Testis (tissue), 5 donors: ENCODE measurements at regions of chr16 and their contacts with region 1.

Region 1: DNA sequence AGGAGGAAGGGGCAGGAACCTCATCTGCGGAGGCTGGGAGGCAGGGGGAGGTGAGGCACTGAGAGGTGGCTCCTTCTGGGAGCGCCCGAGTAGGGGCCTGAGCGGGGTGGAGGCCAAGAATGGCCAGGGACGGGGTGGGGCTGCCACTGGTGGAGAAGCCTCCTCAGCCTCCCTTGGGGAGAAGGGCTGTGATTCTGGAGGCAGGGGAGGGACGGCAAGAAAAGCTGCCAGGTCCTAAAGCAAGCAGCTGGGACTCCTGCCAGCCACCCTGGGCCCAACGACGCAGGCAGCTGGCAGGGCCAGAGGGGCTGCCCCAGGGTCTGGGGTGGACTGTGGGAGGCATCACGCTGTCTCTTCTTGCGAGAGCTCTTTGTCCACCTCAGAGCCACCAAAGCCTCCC is 12.7 kb upstream of the MLKL start:
- DNase-seq: no peak
- H3K4me3 ChIP-seq: no peak overlapping the region
- H3K27ac ChIP-seq: no peak overlapping the region
- H3K4me1 ChIP-seq: no peaks in the 10 kb centered on the region
- H3K27me3 ChIP-seq: no peaks in the 10 kb centered on the region
- CTCF ChIP-seq: no peak
- POLR2A ChIP-seq: no peak

Region 2: DNA sequence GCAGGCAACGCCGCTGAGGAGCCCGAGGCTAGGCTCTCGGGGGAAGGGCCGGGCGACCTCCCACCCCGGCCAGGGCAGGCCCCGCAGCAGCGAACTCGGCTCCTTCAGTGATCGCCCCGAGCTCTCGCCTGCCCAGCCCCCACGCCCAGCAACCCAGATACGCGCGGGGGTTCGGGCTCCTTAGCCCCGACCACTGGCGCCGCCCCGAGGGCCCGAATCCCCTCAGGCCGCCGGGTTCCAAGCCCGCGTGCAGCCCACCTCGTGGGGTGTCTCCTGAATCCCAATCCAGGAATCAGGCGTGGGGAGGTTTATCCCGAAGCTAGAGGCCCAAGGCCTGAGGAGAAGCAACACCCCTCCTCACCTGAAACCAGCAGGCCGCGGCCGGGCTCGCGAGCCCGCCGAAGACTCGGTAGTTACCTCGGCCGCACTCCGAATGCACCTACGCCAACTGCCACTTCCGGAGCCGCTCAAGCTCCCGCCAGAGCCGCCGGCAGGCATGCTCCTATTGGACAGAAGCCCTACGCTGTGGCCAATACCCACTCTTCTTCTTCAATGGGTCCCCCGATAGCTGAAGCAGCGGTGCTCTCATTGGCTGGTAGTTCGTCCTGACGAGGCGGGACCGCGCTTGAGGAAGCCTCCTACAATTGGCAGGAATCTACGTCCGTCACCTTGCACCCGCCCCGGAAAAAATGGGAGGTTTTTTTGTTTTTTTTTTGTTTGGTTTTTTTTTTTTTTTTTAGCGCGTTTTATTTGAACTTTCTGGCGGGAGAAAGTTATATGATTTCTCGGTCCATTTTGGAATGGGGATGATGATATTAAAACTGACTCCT is 46.7 kb before region 1 on chr16 and contains the start of gene RFWD3:
- intact Hi-C with region 1: no loop called
- DNase-seq: peak; percentile 99
- H3K4me3 ChIP-seq: peak within 1 kb of the TSS; percentile 88 to 89
- H3K27ac ChIP-seq: peak within 1 kb of the TSS; percentile 72 to 83
- H3K4me1 ChIP-seq: peaks cover 7% of the 10 kb centered on the region
- H3K27me3 ChIP-seq: no peaks in the 10 kb centered on the region
- CTCF ChIP-seq: no peak
- POLR2A ChIP-seq: peak; percentile 22
- total RNA-seq, gene RFWD3: 66.8 to 100 TPM

Region 3: GRCh38 chr16:74862741-74863244 is 149.5 kb after region 1 on chr16:
- intact Hi-C with region 1: loop called (anchors 5 kb)
- DNase-seq: no peak
- H3K4me3 ChIP-seq: no peak overlapping the region
- H3K27ac ChIP-seq: no peak overlapping the region
- H3K4me1 ChIP-seq: no peaks in the 10 kb centered on the region
- H3K27me3 ChIP-seq: no peaks in the 10 kb centered on the region
- CTCF ChIP-seq: peak; percentile 68 to 83 (median 79)
- POLR2A ChIP-seq: no peak